ENCODE measurements at regions of chrX and their contacts with region 1.

Region 1: GRCh38 chrX:19827088-19827487 is 60.3 kb downstream of the SH3KBP1 start:
- DNase-seq: no peak
- H3K4me3 Mint-ChIP-seq: no peak overlapping the region
- H3K27ac Mint-ChIP-seq: peak overlapping the region; percentile 79
- H3K4me1 Mint-ChIP-seq: peaks cover 24% of the 10 kb centered on the region
- H3K27me3 Mint-ChIP-seq: no peaks in the 10 kb centered on the region

Region 2: DNA sequence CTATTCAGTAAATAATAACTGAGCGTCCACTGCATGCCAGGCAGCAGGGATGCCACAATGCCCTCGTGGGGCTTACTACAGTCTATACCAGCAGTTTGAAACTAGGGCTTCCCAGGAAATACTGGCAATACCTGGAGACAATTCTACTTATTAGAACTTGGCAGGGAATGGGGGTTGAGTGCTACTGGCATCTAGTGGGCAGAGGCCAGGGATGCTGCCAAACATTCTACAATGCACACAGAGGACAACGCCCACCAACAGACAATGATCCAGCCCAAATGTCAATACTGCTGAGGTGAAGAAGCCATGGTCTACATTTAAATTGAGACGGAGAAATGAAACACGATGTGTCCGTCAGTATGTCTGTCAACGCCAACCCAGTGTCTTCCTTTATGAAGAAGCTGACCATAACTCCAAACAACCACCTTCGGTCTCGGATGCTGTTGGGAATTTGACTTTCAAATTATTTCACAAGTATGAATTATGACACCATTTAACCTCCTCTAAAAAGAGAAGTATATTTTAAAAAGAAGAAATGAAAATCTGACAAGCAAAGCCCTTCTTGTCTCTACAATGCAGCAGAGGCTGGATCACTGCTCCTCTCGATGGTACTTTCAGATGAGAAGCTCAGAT is 188.1 kb before region 1 on chrX:
- CTCF ChIA-PET with region 1: no interaction called
- POLR2A ChIA-PET with region 1: no interaction called
- DNase-seq: no peak
- H3K4me3 Mint-ChIP-seq: no peak overlapping the region
- H3K27ac Mint-ChIP-seq: no peak overlapping the region
- H3K4me1 Mint-ChIP-seq: peaks cover 26% of the 10 kb centered on the region
- H3K27me3 Mint-ChIP-seq: no peaks in the 10 kb centered on the region

Region 3: GRCh38 chrX:19865567-19866363 is 38.7 kb after region 1 on chrX:
- CTCF ChIA-PET with region 1: no interaction called
- POLR2A ChIA-PET with region 1: no interaction called
- DNase-seq: no peak
- H3K4me3 Mint-ChIP-seq: no peak overlapping the region
- H3K27ac Mint-ChIP-seq: no peak overlapping the region
- H3K4me1 Mint-ChIP-seq: peaks cover 54% of the 10 kb centered on the region
- H3K27me3 Mint-ChIP-seq: no peaks in the 10 kb centered on the region

Region 4: GRCh38 chrX:19876962-19877361 is 49.9 kb after region 1 on chrX:
- CTCF ChIA-PET with region 1: no interaction called
- POLR2A ChIA-PET with region 1: no interaction called
- DNase-seq: no peak
- H3K4me3 Mint-ChIP-seq: no peak overlapping the region
- H3K27ac Mint-ChIP-seq: no peak overlapping the region
- H3K4me1 Mint-ChIP-seq: peaks cover 39% of the 10 kb centered on the region
- H3K27me3 Mint-ChIP-seq: no peaks in the 10 kb centered on the region

Region 5: DNA sequence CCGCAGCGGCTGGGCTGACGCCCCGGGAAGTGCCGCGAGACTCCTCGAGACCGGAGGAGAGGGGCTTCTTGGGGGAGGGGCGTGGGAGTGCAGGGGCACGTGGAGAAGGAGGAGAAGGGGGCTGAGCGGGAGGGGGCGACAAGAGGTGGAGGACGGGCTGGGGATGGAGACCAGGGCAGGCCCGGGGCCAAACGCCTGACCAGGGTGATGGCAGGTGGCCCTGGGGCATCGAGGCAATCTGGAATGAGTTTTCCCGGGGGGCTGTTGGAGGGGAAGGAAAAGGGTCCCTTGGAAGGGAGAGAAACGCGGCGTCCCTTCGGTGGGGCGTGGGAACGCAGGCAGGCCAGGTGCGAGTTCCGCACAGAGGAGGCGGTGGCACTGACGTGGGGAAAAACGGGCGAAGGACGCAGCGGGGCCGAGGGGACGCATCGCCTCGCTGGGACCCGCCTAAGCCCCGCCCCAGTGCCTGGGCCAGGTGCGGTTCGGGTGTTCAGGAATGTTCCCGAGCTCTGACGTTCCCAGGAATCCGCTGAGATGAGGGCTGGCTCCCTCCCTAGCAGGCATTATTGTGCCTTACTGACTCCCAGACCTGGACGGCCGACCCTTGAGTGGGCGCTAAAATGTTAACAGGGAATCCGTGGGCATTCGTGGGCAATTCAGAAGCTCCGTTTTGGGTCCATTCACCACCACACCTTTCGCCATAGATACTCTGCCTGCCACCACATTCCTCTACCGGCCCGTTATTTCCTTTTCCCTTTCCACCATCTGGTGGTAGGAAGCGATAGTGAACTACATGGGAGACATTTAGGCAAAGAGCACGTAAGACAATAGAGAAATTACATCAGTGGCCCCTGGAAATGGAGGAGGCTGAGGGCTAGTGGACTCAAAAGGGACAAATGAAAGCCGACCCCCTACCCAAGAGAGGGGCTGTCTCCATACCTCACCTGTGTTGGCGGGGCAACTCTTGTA is 61.1 kb after region 1 on chrX:
- CTCF ChIA-PET with region 1: interaction called, 12 read pairs
- POLR2A ChIA-PET with region 1: no interaction called
- DNase-seq: peak; percentile 38
- H3K4me3 Mint-ChIP-seq: peak overlapping the region; percentile 75
- H3K27ac Mint-ChIP-seq: peak overlapping the region; percentile 69
- H3K4me1 Mint-ChIP-seq: peaks cover 50% of the 10 kb centered on the region
- H3K27me3 Mint-ChIP-seq: no peaks in the 10 kb centered on the region